K562 (cell line): ENCODE measurements at regions of chr5 and their contacts with region 1.

Region 1: GRCh38 chr5:178086276-178086675 is 27.1 kb upstream of the N4BP3 start:
- DNase-seq: peak in 1 of 4 experiments; percentile 15
- ATAC-seq: no peak
- H3K4me3 ChIP-seq: no peak overlapping the region
- H3K27ac ChIP-seq: no peak overlapping the region
- H3K4me1 ChIP-seq: peaks cover 7 to 11% of the 10 kb centered on the region in 2 experiments; a peak in 4 of 5 replicates
- H3K27me3 ChIP-seq: peaks cover 2 to 31% of the 10 kb centered on the region in 2 experiments; a peak in 2 of 5 replicates
- CTCF ChIP-seq: no peak
- EP300 ChIP-seq: no peak
- POLR2A ChIP-seq: no peak
- RAD21 ChIP-seq: no peak

Region 2: DNA sequence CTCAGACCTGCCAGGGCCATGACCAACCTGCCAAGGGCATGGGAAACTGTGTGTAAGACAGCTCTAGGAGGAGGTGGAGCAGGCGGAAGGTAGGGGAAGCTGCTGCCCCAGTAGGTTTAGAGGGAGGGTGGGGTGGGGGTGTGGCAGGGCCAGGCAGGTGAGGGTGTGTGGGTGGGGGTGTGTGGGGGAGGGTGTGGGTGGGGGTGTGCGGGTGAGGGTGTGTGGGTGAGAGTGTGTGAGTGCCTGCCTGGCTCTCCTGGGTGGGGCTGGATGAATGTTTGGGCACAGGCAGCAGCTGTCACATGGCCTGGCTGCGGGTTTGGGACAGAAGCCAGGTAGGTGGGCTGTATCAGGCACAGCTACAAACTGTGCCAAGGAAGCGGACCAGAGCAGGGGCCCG is 18.2 kb after region 1 on chr5:
- CTCF ChIA-PET with region 1: no interaction called
- POLR2A ChIA-PET with region 1: interaction called, 10 read pairs
- in situ Hi-C with region 1: no loop called
- intact Hi-C with region 1: no loop called
- DNase-seq: no peak
- ATAC-seq: no peak
- H3K4me3 ChIP-seq: no peak overlapping the region
- H3K27ac ChIP-seq: no peak overlapping the region
- H3K4me1 ChIP-seq: peaks cover 0 to 6% of the 10 kb centered on the region in 2 experiments; a peak in 1 of 5 replicates
- H3K27me3 ChIP-seq: no peaks in the 10 kb centered on the region
- CTCF ChIP-seq: no peak
- EP300 ChIP-seq: no peak
- POLR2A ChIP-seq: no peak
- RAD21 ChIP-seq: no peak

Region 3: DNA sequence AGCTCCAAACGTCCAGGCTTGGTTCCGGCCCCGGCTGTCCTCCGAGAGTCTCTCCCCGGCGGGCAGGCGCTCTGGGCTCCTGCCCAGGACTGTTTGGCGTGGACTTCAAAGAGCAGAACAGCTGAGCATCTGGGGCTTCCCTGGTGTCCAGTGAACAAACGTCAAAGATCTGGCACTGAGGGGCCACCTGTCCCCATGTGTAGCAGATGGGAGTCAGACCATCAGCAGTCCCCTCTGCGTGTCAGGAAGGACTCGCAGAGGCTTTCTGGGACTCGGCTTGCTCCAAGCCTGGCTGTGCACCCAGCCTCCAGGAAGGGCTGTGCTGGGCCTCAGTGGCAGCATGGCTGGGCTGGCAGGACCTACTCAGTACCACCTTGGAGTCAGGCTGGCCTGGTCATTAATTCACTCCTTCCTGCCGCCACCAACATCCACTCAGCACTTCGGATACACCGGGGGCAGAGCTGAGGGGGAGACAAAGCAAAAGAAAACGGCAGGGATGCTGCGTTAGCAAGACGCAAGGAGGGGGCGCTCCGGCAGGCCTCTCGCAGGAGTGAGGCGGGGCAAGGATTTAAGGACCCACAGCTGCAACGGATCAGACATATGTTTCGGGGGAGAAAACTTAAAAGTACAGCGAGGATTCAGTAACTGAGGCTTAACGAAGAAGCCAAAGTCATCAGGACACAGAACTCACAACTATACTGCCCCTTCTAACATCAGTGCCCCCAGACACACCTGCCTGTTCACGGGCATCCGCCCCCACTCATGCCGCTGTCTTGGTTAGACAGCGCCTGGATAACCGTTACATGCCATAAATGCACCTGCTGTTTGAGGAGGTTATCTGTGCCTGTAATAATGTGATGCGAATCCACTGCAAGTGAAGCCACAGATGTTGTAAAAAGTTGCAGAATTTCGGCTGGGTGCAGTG is 310.8 kb after region 1 on chr5:
- CTCF ChIA-PET with region 1: no interaction called
- POLR2A ChIA-PET with region 1: no interaction called
- in situ Hi-C with region 1: no loop called
- intact Hi-C with region 1: no loop called
- DNase-seq: no peak
- ATAC-seq: no peak
- H3K4me3 ChIP-seq: no peak overlapping the region
- H3K27ac ChIP-seq: no peak overlapping the region
- H3K4me1 ChIP-seq: no peaks in the 10 kb centered on the region; a peak in 1 of 5 replicates
- H3K27me3 ChIP-seq: peaks cover 19 to 53% of the 10 kb centered on the region in 2 experiments; a peak in 4 of 5 replicates
- CTCF ChIP-seq: no peak
- EP300 ChIP-seq: no peak
- POLR2A ChIP-seq: no peak
- RAD21 ChIP-seq: no peak